IMR-90 (cell line): ENCODE measurements at regions of chr7 and their contacts with region 1.

Region 1: GRCh38 chr7:151110941-151111645 is 24.8 kb downstream of the AGAP3 start:
- DNase-seq: peak; percentile 65
- ATAC-seq: peak; percentile 48
- H3K4me3 ChIP-seq: no peak overlapping the region
- H3K27ac ChIP-seq: no peak overlapping the region
- H3K4me1 ChIP-seq: peaks cover 24% of the 10 kb centered on the region
- H3K27me3 ChIP-seq: no peaks in the 10 kb centered on the region
- CTCF ChIP-seq: peak; percentile 89
- POLR2A ChIP-seq: no peak
- RAD21 ChIP-seq: peak; percentile 90

Region 2: DNA sequence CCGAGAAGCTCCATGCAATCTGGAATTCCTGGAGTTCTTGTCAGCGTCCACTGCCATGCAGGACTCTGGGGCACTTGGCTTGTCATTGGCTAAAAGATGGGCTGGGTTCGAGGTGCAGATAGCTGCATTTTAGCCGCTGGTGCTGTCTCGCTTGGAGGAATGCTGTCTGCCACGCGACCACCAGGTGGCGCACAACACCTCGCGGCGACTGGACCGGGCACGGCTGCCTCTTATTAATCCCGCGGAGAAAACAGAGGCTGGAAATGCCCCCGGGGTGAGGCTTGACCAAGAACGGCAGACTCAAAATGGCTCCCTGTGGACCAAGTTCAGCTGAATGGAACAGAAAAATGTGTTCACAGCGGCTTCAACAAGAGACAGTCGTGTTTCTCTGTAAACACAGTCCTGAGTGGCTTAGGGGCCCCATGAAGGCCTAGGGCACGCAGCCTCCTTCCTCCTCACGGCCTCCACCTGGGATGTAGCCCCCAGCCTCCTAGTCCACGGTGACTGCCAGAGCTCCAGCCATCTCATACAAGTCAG is 212.6 kb before region 1 on chr7:
- CTCF ChIA-PET with region 1: no interaction called
- POLR2A ChIA-PET with region 1: no interaction called
- dilution Hi-C with region 1: no loop called
- in situ Hi-C with region 1: loop called (anchors 10 kb)
- intact Hi-C with region 1: loop called (anchors 5 kb)
- DNase-seq: peak; percentile 48
- ATAC-seq: peak; percentile 86
- H3K4me3 ChIP-seq: no peak overlapping the region
- H3K27ac ChIP-seq: no peak overlapping the region
- H3K4me1 ChIP-seq: peaks cover 6% of the 10 kb centered on the region; the same call in 1 of the 2 replicates
- H3K27me3 ChIP-seq: peaks cover 15% of the 10 kb centered on the region; the same call in 1 of the 2 replicates
- CTCF ChIP-seq: peak; percentile 91
- POLR2A ChIP-seq: no peak
- RAD21 ChIP-seq: peak; percentile 83

Region 3: DNA sequence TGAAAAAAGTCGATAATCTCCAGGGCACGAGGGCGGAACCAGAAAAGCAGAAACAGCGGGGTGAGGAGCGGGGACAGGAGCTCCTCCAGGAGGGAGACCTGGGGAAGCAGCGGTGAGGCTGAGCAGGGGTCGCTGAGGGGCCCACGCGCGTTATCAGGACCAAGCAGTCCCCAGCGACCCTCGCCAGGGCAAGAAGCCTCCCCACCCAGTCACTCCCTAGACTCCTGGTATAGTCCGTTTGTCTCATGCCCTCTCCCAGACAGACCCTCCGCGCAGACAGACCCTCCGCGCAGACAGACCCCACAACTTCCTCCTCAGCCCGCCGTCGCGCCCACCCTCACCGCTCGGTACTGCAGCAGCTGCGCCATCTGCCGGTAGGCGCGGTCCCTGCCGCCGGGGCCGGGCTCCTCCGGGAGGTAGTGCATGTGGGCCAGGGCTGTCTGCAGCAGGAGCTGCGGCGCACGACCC is 93.1 kb before region 1 on chr7:
- CTCF ChIA-PET with region 1: interaction called, 3 read pairs
- POLR2A ChIA-PET with region 1: no interaction called
- dilution Hi-C with region 1: no loop called
- in situ Hi-C with region 1: loop called (anchors 5 kb)
- intact Hi-C with region 1: loop called (anchors 5 kb)
- DNase-seq: peak; percentile 25
- ATAC-seq: peak; percentile 90
- H3K4me3 ChIP-seq: 0 out of 2 replicates have a peak overlapping the region, but pooled peaks have one; percentile 23
- H3K27ac ChIP-seq: no peak overlapping the region
- H3K4me1 ChIP-seq: peaks cover 3% of the 10 kb centered on the region; the same call in 1 of the 2 replicates
- H3K27me3 ChIP-seq: peaks cover 58% of the 10 kb centered on the region
- CTCF ChIP-seq: peak; percentile 79
- POLR2A ChIP-seq: no peak
- RAD21 ChIP-seq: peak; percentile 53

Region 4: DNA sequence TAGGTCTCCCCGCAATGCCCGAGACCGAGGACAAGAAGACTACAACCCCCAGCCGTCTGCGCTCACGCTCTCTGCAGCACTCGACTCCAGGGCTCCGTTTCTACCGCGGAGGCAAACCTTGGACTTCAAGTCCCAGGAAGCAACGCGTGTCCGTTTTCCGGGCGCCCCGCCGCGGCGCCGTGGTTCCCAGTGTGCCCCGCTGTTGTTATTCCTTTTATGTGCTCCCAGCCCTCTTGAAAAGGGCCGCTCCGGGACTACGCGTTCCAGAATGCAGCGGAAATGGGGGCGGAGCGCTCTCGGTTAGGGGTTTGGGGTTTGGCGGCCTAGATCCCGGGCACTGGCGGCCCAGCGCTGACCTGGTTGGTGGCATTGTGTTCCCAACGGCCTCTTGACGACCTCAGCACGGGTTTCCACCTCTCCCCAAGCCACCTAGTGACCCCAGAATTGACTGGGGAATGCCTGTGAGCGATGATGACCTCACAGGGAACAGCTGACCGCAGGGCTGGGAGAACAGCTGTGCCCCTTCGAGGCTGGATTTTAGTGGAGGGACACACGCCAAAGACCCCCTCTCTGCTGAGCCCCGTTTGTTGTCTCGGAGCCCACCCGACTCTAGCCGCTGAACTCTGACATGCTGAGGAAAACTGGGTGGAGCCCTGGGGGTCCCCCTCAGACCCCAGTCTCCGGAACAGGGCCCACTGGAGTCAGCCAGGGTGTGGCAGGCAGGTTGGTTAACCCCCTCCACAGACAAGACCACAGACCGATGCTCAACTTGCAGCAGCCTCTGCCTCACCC is 52.9 kb before region 1 on chr7:
- CTCF ChIA-PET with region 1: no interaction called
- POLR2A ChIA-PET with region 1: interaction called, 6 read pairs
- dilution Hi-C with region 1: no loop called
- in situ Hi-C with region 1: no loop called
- intact Hi-C with region 1: loop called (anchors 1 kb)
- DNase-seq: peak; percentile 100
- ATAC-seq: peak; percentile 86
- H3K4me3 ChIP-seq: peak overlapping the region; percentile 38
- H3K27ac ChIP-seq: peak overlapping the region; percentile 91
- H3K4me1 ChIP-seq: peaks cover 40% of the 10 kb centered on the region
- H3K27me3 ChIP-seq: no peaks in the 10 kb centered on the region
- CTCF ChIP-seq: no peak
- POLR2A ChIP-seq: no peak; the same call in 1 of the 2 replicates
- RAD21 ChIP-seq: no peak